Activated CD4-positive, alpha-beta T cell treated with anti-CD3 and anti-CD28 coated beads, Interleukin-2, amount 10 ng/mL, durations not matched to agents 7 days and 5 days (primary cell): ENCODE measurements at regions of chr11 and their contacts with region 1.

Region 1: DNA sequence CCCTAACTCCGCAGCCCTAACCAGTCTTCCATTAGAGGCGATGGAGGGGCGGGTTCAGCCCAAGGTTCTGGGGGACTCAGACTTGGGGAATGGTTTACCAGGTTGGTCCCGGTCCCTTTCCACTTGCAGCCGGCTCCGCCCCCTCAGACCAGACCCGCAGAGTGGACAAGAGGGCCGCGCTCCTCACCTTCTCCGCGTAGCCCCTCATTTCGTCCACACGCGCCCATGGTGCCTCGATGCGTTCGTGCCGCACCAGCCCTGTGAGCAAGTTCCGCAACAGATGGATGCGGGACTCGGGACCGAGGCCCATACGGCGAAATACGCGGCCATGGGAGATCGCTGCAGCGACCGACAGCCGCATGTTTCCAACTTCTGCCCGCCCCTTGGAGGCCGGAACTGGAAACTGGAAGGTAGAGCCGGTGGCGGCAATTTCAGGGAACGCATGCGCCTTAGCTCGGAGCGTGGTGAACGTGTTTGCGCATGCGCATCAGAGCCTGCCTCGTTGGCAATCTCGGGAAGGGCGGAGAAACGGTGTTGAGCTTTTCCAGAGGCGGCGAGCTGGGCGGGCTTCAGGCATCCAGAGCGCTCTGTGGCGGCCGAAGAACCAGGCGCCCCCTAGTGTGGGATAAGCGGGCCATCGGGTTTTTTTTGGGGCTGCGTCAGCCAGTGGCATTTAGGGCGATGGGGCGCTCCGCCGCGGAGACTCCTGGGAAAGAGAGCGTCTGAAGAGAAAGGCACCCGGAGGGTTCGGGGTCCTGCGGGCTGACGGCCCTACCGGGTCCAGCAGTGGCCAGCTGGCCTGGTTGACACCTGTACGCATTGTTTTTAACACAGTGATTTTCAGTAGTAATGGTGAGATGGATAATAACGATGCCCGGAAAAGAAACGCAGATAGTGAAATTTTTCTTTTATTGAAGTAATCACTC is at the start of gene MRPL17:
- DNase-seq: peak; percentile 100
- H3K4me3 Mint-ChIP-seq: peak within 1 kb of the TSS; percentile 97
- H3K27ac Mint-ChIP-seq: peak within 1 kb of the TSS; percentile 97
- H3K4me1 Mint-ChIP-seq: peaks cover 31% of the 10 kb centered on the region
- H3K27me3 Mint-ChIP-seq: no peaks in the 10 kb centered on the region
- total RNA-seq, gene MRPL17: 50.0 to 56.0 TPM

Region 2: GRCh38 chr11:6127881-6128280 is 555.3 kb before region 1 on chr11:
- CTCF ChIA-PET with region 1: no interaction called
- POLR2A ChIA-PET with region 1: no interaction called
- DNase-seq: no peak
- H3K4me3 Mint-ChIP-seq: no peak overlapping the region
- H3K27ac Mint-ChIP-seq: no peak overlapping the region
- H3K4me1 Mint-ChIP-seq: no peaks in the 10 kb centered on the region
- H3K27me3 Mint-ChIP-seq: peaks cover 1% of the 10 kb centered on the region

Region 3: DNA sequence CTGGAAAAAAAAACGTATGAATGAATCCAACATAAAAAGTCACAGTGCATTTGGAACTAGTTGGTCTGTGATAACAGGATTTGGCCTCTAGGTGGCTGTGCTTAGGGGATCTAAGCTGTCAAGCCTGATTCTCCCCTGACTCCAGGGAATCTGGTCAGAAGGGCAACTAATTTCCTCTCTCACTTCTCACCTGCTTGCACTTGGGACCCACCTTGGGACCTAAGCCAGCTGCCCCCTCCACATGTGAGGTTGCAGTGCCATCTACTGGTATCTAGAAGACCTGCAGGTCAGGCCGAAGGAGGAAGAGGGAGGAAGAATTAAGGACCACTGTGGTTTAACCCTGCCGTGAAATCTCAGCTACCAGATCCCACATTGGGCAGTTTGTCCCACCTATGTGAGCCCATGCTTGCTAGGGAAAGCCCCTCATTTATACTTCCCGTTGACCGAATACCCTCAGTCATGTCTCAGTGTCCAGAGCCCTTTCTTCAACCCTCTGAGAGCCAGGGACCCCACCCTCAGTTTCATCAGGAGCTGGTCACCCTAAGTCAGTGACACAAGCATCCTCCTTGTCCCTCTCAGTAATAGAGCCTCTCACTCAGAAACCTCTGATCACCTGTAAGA is 329.7 kb before region 1 on chr11:
- CTCF ChIA-PET with region 1: no interaction called
- POLR2A ChIA-PET with region 1: no interaction called
- DNase-seq: peak; percentile 68
- H3K4me3 Mint-ChIP-seq: no peak overlapping the region
- H3K27ac Mint-ChIP-seq: peak overlapping the region; percentile 2
- H3K4me1 Mint-ChIP-seq: peaks cover 3% of the 10 kb centered on the region
- H3K27me3 Mint-ChIP-seq: peaks cover 2% of the 10 kb centered on the region

Region 4: GRCh38 chr11:6531267-6531752 is 151.9 kb before region 1 on chr11:
- CTCF ChIA-PET with region 1: interaction called, 12 read pairs
- POLR2A ChIA-PET with region 1: no interaction called
- DNase-seq: peak; percentile 54
- H3K4me3 Mint-ChIP-seq: no peak overlapping the region
- H3K27ac Mint-ChIP-seq: no peak overlapping the region
- H3K4me1 Mint-ChIP-seq: peaks cover 14% of the 10 kb centered on the region
- H3K27me3 Mint-ChIP-seq: no peaks in the 10 kb centered on the region

Region 5: DNA sequence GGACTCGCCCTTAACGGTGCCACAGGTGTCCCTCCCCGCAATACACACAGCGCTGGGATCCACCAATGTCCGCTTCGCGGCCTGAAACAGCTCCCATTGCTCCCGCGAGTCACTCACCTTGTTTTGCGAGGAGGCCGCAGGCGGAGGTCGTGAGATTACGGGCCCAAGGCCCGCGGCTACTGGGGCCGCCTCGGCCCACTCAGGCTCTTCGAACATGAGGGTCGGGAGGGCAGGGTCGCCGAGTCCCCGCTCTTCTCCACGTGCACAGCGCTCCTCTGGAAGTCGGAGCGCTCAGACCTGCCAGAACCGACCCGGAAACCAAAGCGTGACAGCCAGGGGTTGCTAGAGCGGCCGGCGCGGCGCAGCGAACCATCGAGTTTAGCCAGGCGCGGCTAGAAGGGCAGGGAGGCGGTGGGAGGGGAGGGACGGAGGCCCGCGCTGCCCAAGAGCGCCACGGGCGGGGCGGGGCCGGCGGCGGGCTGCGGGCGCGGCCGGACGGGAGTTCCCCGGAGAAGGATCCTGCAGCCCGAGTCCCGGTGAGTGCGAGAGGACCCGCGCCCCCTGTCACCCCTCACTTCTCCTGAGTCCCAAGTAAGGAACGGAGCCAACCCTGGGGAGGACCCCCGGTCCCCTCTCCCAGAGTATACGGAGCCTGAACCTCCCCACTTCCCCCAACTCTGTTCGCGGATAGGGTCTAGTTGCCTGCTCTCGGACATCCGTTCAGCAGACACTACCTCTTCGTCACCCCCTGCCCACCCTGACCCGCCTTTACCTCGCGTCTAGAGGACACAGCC is 79.7 kb before region 1 on chr11 and contains the starts of genes ILK and RRP8:
- CTCF ChIA-PET with region 1: interaction called, 28 read pairs
- POLR2A ChIA-PET with region 1: no interaction called
- DNase-seq: peak; percentile 89
- H3K4me3 Mint-ChIP-seq: no peak within 1 kb of the TSS
- H3K27ac Mint-ChIP-seq: no peak within 1 kb of the TSS
- H3K4me1 Mint-ChIP-seq: peaks cover 18% of the 10 kb centered on the region
- H3K27me3 Mint-ChIP-seq: no peaks in the 10 kb centered on the region
- total RNA-seq, gene ILK: 155 to 163 TPM
- total RNA-seq, gene RRP8: 23.0 to 27.1 TPM

Region 6: DNA sequence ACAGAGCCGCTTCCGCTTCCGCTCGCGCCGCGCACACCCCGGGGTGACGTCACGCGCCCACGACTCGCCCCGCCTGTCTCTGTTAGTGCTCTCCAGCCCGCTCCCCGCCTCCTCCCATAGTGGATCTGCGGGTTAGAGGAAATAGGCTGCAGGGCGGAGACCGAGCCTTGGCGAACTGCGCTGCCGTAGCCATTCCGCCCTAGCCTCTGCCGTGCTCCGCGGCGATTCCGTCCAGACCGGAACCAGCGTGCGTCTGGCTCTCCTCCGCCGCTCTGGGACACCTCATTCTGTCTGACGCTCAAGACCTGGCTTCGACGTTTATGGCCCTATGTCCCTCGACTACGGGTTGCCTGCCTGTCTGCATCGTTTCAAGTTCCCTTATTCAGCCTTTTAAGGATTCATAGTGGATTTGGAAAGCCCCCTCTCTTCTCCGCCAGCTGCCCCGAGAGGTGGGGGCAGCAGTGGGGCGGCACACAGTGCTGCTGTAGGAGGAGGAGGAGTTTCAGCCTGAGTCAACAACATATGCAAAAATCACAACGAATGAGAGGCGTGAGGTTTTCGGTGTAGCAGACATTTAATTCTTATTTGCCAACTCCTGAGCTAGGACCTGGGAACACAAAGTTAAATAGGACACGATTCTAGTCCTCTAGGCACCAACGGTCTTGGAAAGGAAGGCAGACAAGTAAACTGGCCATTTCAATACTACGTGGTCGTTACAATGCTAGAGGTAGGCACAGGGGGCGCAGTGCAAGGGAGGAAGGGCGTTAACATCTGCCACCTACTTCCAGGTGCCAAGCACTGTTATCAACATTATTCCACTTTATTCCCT is 70.8 kb before region 1 on chr11 and contains the start of gene TAF10:
- CTCF ChIA-PET with region 1: interaction called, 14 read pairs
- POLR2A ChIA-PET with region 1: interaction called, 7 read pairs
- DNase-seq: peak; percentile 96
- H3K4me3 Mint-ChIP-seq: peak within 1 kb of the TSS; percentile 80
- H3K27ac Mint-ChIP-seq: peak within 1 kb of the TSS; percentile 85
- H3K4me1 Mint-ChIP-seq: peaks cover 42% of the 10 kb centered on the region
- H3K27me3 Mint-ChIP-seq: no peaks in the 10 kb centered on the region
- total RNA-seq, gene TAF10: 138 to 156 TPM

Region 7: GRCh38 chr11:6619004-6619745 is 64.0 kb before region 1 on chr11 and contains the start of gene TPP1:
- CTCF ChIA-PET with region 1: interaction called, 14 read pairs
- POLR2A ChIA-PET with region 1: no interaction called
- DNase-seq: peak; percentile 94
- H3K4me3 Mint-ChIP-seq: no peak within 1 kb of the TSS
- H3K27ac Mint-ChIP-seq: no peak within 1 kb of the TSS
- H3K4me1 Mint-ChIP-seq: peaks cover 7% of the 10 kb centered on the region
- H3K27me3 Mint-ChIP-seq: no peaks in the 10 kb centered on the region
- total RNA-seq, gene TPP1: 90.1 to 105 TPM

Region 8: DNA sequence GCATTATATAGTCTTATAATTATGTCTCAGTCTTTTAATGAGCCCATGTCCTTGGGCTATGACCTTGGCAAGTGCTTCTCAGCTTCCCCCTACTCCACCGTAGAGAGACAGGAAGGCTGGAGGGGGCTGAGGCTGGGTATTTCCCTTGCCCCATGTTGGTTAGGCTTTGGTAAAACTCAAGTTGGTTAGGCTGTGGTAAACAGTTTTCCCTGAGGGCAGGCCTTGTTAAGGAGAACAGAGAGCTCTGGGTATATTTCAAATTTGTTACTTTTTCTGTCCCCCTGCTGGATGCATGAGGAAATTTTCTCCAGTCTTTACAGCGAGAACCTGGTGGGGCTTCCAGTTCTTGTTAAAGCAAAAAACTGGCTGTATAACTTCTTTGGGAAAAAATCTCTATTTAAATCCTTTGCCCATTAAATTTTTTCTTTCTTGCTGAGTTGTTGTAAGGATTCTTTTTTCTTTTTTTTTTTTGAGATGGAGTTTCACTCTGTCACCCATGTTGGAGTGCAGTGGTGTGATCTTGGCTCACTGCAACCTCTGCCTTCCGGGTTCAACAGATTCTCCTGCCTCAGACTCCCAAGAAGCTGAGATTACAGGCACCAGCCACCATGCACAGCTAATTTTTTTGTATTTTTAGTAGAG is 15.3 kb before region 1 on chr11:
- CTCF ChIA-PET with region 1: interaction called, 13 read pairs
- POLR2A ChIA-PET with region 1: interaction called, 3 read pairs
- DNase-seq: peak; percentile 46
- H3K4me3 Mint-ChIP-seq: no peak overlapping the region
- H3K27ac Mint-ChIP-seq: peak overlapping the region; percentile 54
- H3K4me1 Mint-ChIP-seq: peaks cover 63% of the 10 kb centered on the region
- H3K27me3 Mint-ChIP-seq: peaks cover 3% of the 10 kb centered on the region

Region 9: GRCh38 chr11:6828103-6828502 is 144.9 kb after region 1 on chr11:
- CTCF ChIA-PET with region 1: no interaction called
- POLR2A ChIA-PET with region 1: no interaction called
- DNase-seq: no peak
- H3K4me3 Mint-ChIP-seq: no peak overlapping the region
- H3K27ac Mint-ChIP-seq: no peak overlapping the region
- H3K4me1 Mint-ChIP-seq: no peaks in the 10 kb centered on the region
- H3K27me3 Mint-ChIP-seq: no peaks in the 10 kb centered on the region